Mammary epithelial cell (primary cell): ENCODE measurements at regions of chr10 and their contacts with region 1.

Region 1: DNA sequence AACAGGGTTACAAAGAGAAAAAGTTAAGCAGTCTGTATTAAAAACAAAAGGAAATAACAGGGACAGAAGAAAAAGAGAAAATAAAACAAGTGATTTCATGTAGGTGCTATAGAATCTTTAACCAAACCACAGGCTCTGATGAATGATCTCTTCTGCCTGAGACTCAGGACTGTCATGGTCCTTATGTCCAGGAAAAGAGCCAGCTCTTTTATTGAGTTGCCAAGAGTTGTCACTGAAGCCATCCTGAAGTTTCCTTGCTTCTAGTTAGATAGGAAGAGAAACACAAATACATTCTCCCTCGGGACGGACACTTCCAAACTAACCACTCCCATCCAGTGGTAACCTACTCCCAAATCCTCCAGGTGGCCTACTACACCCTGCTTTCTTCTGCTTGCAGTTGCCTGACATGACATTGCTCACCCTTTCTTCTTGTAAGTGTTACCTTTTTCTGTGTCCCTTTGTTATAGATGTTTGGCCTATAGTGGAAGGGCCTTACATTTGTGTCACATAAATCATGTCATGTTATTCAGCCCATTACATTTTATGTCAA is 346.7 kb downstream of the NRG3 start:
- DNase-seq: peak; percentile 35
- H3K4me3 ChIP-seq: no peak overlapping the region
- H3K27ac ChIP-seq: no peak overlapping the region
- H3K4me1 ChIP-seq: peaks cover 8% of the 10 kb centered on the region
- H3K27me3 ChIP-seq: no peaks in the 10 kb centered on the region
- CTCF ChIP-seq: peak; percentile 39 to 60

Region 2: DNA sequence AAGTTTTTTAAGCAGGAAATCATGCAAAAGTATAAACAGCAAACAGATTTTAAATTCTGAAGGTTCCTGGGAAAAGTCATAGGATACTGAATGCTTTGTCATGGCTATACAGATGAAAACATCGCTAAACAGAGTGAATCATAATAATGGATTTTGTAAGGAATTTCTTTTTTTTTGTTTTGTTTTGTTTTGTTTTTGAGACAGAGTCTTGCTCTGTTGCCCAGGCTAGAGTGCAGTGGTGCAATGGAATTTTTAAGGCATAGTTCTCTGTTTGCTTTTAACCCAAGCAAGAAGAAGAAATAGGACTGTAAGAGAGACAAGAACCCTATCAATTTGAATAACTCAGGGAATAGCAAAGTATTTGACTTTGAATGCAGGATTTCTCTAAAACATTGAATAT is 61.3 kb before region 1 on chr10:
- CTCF ChIA-PET with region 1: no interaction called
- dilution Hi-C with region 1: no loop called
- in situ Hi-C with region 1: no loop called
- intact Hi-C with region 1: no loop called
- DNase-seq: no peak
- H3K4me3 ChIP-seq: no peak overlapping the region
- H3K27ac ChIP-seq: no peak overlapping the region
- H3K4me1 ChIP-seq: no peaks in the 10 kb centered on the region
- H3K27me3 ChIP-seq: no peaks in the 10 kb centered on the region
- CTCF ChIP-seq: no peak

Region 3: GRCh38 chr10:82330701-82331100 is 109.0 kb after region 1 on chr10:
- CTCF ChIA-PET with region 1: no interaction called
- dilution Hi-C with region 1: no loop called
- in situ Hi-C with region 1: no loop called
- intact Hi-C with region 1: loop called (anchors 5 kb)
- DNase-seq: no peak
- H3K4me3 ChIP-seq: no peak overlapping the region
- H3K27ac ChIP-seq: no peak overlapping the region
- H3K4me1 ChIP-seq: no peaks in the 10 kb centered on the region
- H3K27me3 ChIP-seq: no peaks in the 10 kb centered on the region
- CTCF ChIP-seq: no peak

Region 4: DNA sequence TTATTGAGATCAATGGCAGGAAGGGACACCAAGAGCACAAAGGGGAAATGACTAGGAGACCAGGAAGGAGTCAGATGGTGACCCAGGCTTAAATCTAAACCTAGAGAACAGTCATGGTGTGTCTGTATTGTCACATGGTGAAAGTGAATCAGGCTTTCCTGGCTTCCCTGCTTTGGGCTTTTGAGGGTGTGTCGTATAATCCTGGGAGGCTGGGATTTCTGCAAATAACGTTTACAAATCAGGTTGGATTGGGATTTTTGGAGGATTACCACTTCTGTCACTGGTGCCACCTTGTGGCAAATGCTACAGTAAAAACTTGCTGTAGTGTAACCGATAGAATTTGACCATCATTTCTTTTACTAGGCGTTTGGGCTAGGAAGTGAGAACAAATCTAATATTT is 155.9 kb after region 1 on chr10:
- CTCF ChIA-PET with region 1: no interaction called
- dilution Hi-C with region 1: no loop called
- in situ Hi-C with region 1: no loop called
- intact Hi-C with region 1: loop called (anchors 1 kb)
- DNase-seq: peak; percentile 26
- H3K4me3 ChIP-seq: no peak overlapping the region
- H3K27ac ChIP-seq: no peak overlapping the region
- H3K4me1 ChIP-seq: no peaks in the 10 kb centered on the region
- H3K27me3 ChIP-seq: no peaks in the 10 kb centered on the region
- CTCF ChIP-seq: peak; percentile 34 to 58

Region 5: GRCh38 chr10:82796510-82796909 is 574.8 kb after region 1 on chr10:
- CTCF ChIA-PET with region 1: no interaction called
- dilution Hi-C with region 1: no loop called
- in situ Hi-C with region 1: no loop called
- intact Hi-C with region 1: loop called (anchors 5 kb)
- DNase-seq: no peak
- H3K4me3 ChIP-seq: no peak overlapping the region
- H3K27ac ChIP-seq: no peak overlapping the region
- H3K4me1 ChIP-seq: no peaks in the 10 kb centered on the region
- H3K27me3 ChIP-seq: no peaks in the 10 kb centered on the region
- CTCF ChIP-seq: peak; percentile 45 to 52